ENCODE measurements at regions of chr2 and their contacts with region 1.

Region 1: DNA sequence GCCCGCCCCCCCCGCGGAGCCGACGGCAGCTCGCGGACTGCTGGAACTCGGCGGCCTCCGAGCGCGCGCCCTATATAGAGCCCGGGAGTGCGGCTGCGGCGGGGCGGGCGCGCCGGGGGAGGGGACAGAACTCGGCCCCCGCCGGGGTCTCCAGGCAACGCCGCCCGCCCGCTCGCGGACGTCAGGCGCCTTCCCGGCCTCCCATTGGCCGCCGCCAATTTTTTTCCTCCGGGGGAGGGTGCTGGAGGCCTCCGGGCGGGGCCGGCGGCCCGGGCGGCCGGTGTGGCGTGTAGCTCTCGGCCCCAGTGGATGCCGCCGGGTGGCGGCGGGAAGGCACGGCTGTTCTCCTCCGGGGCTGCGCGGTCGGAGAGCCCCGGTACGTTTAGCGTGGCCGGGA is at the start of gene ZFP36L2:
- DNase-seq: peak; percentile 96
- ATAC-seq: peak; percentile 65
- H3K4me3 Mint-ChIP-seq: peak within 1 kb of the TSS; percentile 98
- H3K27ac Mint-ChIP-seq: peak within 1 kb of the TSS; percentile 100
- H3K4me1 Mint-ChIP-seq: peaks cover 28% of the 10 kb centered on the region
- H3K27me3 Mint-ChIP-seq: no peaks in the 10 kb centered on the region
- total RNA-seq, gene ZFP36L2: 166 TPM

Region 2: GRCh38 chr2:42944779-42945415 is 281.7 kb before region 1 on chr2:
- CTCF ChIA-PET with region 1: interaction called, 89 read pairs
- POLR2A ChIA-PET with region 1: interaction called, 5 read pairs
- DNase-seq: no peak
- ATAC-seq: no peak
- H3K4me3 Mint-ChIP-seq: no peak overlapping the region
- H3K27ac Mint-ChIP-seq: no peak overlapping the region
- H3K4me1 Mint-ChIP-seq: peaks cover 4% of the 10 kb centered on the region
- H3K27me3 Mint-ChIP-seq: peaks cover 2% of the 10 kb centered on the region

Region 3: DNA sequence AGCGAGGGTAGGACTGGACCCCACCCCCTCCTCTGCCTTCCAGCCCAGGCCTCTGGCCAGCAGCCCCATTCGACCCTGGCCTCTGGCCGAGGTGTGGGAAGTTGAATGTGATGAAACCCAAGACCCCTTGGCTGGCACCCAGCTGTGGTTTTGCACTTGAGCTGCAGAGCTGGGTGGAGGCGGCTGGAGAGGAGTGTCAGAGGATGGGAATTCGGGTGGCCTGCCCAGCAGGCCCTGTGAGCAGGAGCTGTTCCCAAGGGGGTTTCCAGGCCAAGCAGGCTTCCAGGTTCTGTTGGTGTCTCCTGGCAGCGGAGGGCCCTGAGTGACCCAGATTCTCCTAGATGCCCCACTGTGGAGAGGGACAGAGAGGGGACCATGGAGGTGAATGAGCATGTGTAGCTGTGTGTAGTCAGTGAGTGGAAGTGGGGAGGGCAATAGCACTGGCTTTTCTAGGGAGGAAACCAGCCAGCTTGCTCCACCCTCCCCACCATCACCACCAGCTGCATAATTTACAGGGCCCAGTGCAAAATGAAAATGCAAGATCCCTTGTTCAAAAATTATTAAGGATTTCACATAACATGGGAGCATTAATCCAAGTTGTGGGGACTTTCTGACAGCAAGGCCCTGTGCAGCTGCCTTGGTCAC is 262.0 kb before region 1 on chr2:
- CTCF ChIA-PET with region 1: interaction called, 20 read pairs
- POLR2A ChIA-PET with region 1: interaction called, 4 read pairs
- DNase-seq: no peak
- ATAC-seq: no peak
- H3K4me3 Mint-ChIP-seq: no peak overlapping the region
- H3K27ac Mint-ChIP-seq: no peak overlapping the region
- H3K4me1 Mint-ChIP-seq: peaks cover 21% of the 10 kb centered on the region
- H3K27me3 Mint-ChIP-seq: peaks cover 12% of the 10 kb centered on the region

Region 4: DNA sequence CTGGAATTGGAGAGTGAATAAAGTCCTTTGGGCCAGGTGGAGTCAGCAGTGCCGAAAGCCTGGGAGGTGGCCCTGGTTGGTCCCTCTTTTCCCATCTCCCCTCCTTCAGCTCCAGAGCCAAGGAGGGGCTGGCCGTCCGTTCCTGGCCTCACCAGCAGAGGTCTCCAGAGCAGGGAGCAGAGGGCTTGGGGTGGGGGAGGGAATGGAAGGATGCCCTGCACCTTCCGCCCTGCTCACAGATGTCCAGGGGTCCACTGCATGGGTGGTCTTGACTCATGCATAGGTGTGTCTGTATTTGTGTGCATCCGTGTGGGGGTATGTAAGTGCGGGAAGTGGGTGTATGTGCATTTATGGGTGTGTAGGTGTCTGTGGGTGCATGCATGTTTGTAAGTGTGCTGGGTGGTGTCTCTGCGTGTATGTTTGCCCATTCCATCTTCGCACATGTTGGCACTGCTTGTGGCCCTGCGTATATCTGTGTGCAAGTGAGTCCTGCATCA is 202.0 kb before region 1 on chr2:
- CTCF ChIA-PET with region 1: interaction called, 14 read pairs
- POLR2A ChIA-PET with region 1: interaction called, 3 read pairs
- DNase-seq: peak; percentile 49
- ATAC-seq: no peak
- H3K4me3 Mint-ChIP-seq: no peak overlapping the region
- H3K27ac Mint-ChIP-seq: no peak overlapping the region
- H3K4me1 Mint-ChIP-seq: peaks cover 11% of the 10 kb centered on the region
- H3K27me3 Mint-ChIP-seq: peaks cover 4% of the 10 kb centered on the region

Region 5: GRCh38 chr2:43169987-43170386 is 56.6 kb before region 1 on chr2:
- CTCF ChIA-PET with region 1: interaction called, 103 read pairs
- POLR2A ChIA-PET with region 1: interaction called, 248 read pairs
- DNase-seq: peak; percentile 74
- ATAC-seq: peak; percentile 24
- H3K4me3 Mint-ChIP-seq: peak overlapping the region; percentile 61
- H3K27ac Mint-ChIP-seq: peak overlapping the region; percentile 89
- H3K4me1 Mint-ChIP-seq: peaks cover 83% of the 10 kb centered on the region
- H3K27me3 Mint-ChIP-seq: no peaks in the 10 kb centered on the region

Region 6: DNA sequence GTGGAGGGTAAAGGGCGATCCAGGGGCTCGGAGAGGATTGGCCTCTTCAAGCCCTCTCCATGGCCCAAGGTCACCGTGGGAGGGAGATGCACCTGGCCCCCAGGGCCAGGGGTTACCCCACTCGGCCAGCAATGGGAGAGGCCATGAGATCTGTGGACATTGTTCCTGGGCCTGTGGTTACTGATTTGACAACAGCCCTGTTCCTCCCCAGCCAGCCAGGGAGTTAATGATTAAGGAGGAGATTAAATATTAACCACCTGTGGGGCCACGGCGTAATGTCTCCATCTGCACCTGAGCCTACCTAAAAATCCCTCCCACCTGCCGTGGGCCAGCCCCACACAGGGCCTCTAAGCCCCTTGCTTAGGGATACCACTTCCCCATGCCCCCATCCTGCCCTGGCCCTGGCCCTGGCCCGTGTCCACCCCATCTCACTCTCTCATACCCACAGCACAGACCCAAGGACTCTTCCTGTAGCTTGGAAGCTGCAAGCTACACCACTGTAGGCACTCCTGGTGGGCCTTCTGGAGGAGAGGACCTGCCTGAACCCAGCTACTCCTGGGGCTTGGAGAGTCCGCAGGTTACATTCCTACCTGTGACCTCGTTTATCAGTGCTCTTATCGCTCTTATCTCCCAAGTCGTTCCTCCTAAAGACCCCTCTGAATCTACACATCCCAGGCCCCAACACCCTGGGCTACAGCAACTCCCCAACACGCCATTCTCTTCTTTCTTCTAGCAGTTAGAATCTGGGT is 32.3 kb before region 1 on chr2:
- CTCF ChIA-PET with region 1: interaction called, 37 read pairs
- POLR2A ChIA-PET with region 1: interaction called, 71 read pairs
- DNase-seq: no peak
- ATAC-seq: peak; percentile 14
- H3K4me3 Mint-ChIP-seq: peak overlapping the region; percentile 77
- H3K27ac Mint-ChIP-seq: peak overlapping the region; percentile 94
- H3K4me1 Mint-ChIP-seq: peaks cover 65% of the 10 kb centered on the region
- H3K27me3 Mint-ChIP-seq: no peaks in the 10 kb centered on the region

Region 7: DNA sequence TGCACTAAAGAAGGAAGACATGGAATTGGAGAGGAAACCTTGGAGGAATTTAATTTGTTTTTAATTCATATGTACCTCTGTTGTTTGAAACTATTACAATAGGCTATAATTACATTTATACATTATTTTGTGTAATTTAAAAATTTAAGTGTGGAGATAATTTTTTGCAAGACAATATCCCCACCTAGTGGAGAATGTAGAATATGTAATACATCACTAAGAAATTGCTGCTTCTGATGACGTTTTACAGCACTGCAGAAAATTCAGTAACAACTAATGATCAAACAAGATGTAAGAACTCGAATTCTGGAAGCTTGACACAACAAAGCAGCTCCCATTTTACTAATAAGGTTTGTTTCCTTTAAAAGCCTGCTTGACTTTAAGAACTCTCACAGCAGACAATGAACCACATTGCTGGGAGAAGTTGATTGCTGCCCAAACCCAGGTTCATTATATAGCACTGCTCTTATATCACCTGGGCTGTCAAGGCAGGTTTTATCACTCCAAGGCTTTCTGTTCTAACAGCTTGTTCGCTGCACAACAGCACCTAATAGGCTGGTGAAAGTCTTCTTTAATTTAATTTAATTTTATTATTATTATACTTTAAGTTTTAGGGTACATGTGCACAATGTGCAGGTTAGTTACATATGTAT is 315.9 kb after region 1 on chr2:
- CTCF ChIA-PET with region 1: interaction called, 51 read pairs
- POLR2A ChIA-PET with region 1: no interaction called
- DNase-seq: no peak
- ATAC-seq: peak; percentile 47
- H3K4me3 Mint-ChIP-seq: no peak overlapping the region
- H3K27ac Mint-ChIP-seq: no peak overlapping the region
- H3K4me1 Mint-ChIP-seq: peaks cover 10% of the 10 kb centered on the region
- H3K27me3 Mint-ChIP-seq: no peaks in the 10 kb centered on the region